Right ventricle myocardium inferior (tissue), 1 donor: ENCODE measurements at regions of chr6 and their contacts with region 1.

Region 1: GRCh38 chr6:71012866-71013469 is 56.1 kb upstream of the B3GAT2 start:
- DNase-seq: no peak
- ATAC-seq: no peak

Region 2: GRCh38 chr6:70210462-70210861 is 802.5 kb before region 1 on chr6:
- intact Hi-C with region 1: loop called (anchors 10 kb)
- DNase-seq: no peak
- ATAC-seq: no peak

Region 3: GRCh38 chr6:70310063-70310694 is 702.8 kb before region 1 on chr6:
- intact Hi-C with region 1: loop called (anchors 2 kb)
- DNase-seq: no peak
- ATAC-seq: no peak

Region 4: DNA sequence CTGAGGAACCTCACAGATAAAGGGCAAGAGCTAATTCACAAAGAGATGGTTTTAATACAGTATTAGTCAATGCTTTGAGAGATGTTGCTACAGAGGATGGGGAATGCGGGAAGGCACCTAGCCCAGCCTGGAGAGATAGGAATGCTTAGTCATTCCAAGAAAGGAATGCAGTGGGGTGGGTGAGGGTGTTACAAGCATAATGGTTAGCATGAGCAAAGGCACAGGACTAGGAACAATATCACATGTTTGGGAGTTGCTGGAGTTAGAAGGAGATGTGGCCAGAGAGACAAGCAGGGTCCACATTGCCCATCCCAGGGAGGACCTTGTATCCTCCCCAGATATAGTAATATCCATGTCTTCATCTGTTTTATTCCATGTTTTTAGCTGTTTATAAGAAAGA is 168.6 kb after region 1 on chr6:
- intact Hi-C with region 1: no loop called
- DNase-seq: no peak
- ATAC-seq: no peak

Region 5: DNA sequence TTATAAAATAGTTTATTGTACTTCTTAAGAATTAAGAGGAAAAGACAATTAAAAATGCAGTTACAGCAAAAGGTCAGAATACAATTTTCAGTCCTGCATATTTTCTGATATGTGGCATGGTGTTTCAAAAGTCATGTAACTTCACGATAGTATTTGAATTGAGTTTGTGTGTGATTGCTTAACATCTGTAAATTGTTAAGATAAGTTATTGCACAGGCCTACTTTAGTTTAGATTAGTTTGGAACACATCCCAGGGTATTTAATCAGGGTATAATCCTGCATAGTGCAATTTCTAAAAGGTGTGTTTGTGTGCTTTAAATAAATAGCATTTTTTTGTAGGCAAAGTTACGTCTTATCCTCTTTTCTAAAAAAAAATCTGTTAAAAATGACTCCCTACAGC is 1163.0 kb after region 1 on chr6:
- intact Hi-C with region 1: no loop called
- DNase-seq: no peak
- ATAC-seq: no peak